Calu3 (cell line): ENCODE measurements at regions of chr16 and their contacts with region 1.

Region 1: DNA sequence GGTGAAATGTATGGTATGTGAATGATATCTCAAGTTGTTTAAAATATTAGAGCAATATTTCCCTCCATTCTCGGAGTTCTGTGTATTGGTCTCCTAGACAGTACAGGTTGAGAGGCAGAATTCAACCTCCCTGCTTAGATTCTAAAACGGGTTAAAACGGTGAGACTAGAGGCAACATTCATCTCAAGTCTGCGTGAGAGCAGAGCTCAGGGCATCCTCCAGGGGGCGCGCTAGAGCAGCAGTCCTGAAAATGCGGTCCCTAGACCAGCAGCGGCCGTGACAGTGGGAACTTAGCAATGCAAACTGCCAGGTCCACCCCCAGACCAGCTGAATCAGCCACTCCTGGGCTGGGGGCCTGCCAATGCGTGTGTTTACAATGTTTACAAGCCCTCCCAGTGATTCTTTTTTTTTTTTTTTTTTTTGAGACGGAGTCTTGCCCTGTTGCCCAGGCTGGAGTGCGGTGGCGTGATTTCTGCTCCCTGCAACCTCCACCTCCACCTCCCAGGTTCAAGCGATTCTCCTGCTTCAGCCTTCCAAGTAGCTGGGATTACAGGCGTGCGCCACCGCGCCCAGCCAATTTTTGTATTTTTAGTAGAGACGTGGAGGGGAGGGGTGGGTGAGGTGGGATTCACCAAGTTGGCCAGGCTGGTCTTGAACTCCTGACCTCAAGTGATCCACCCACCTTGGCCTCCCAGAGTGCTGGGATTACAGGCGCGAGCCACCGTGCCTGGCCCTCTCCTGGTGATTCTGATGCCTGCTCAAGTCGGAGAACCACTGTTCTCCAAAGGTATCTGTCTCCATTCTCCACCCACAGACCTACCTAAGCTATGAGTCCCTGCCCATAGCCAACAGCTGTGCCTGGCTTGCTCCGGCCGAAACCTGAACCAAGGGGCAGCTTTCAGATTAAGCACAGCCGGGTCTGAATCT is 24.2 kb downstream of the KLHL36 start:
- DNase-seq: peak; percentile 90
- H3K4me3 Mint-ChIP-seq: no peak overlapping the region
- H3K27ac Mint-ChIP-seq: no peak overlapping the region
- H3K4me1 Mint-ChIP-seq: no peaks in the 10 kb centered on the region
- H3K27me3 Mint-ChIP-seq: peaks cover 17% of the 10 kb centered on the region
- CTCF ChIP-seq: peak; percentile 93

Region 2: DNA sequence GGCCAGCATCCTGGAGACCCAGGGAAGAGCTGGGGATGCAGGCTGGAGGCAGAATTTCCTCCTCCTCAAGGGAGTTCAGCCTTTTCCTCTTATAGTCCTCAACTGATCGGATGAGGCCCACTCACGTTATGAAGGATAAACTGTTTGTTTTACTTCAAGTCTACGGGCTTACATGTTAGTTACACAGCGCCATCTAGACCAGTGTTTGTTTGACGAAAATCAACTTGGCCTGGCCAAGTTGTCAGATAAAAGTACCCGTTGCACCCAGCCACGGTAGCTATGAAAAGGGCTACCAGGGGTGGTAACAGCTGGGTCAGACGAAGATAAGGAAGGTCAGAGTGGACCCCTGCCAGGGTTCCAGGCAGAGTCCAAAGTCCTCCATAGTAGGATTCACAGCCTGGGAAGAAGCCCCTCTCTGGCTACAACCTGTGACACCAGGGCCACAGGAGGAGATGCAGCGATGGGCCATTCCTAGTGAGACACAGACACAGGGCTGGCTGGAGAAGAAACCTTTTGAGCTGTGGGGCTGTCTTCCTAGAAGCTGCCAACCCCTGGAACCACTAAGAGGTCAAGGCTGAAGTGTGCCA is 207.5 kb before region 1 on chr16:
- CTCF ChIA-PET with region 1: interaction called, 13 read pairs
- intact Hi-C with region 1: no loop called
- DNase-seq: no peak
- H3K4me3 Mint-ChIP-seq: no peak overlapping the region
- H3K27ac Mint-ChIP-seq: no peak overlapping the region
- H3K4me1 Mint-ChIP-seq: no peaks in the 10 kb centered on the region
- H3K27me3 Mint-ChIP-seq: no peaks in the 10 kb centered on the region
- CTCF ChIP-seq: no peak

Region 3: GRCh38 chr16:84660973-84661372 is 11.6 kb before region 1 on chr16:
- CTCF ChIA-PET with region 1: no interaction called
- intact Hi-C with region 1: no loop called
- DNase-seq: no peak
- H3K4me3 Mint-ChIP-seq: no peak overlapping the region
- H3K27ac Mint-ChIP-seq: no peak overlapping the region
- H3K4me1 Mint-ChIP-seq: no peaks in the 10 kb centered on the region
- H3K27me3 Mint-ChIP-seq: no peaks in the 10 kb centered on the region
- CTCF ChIP-seq: no peak

Region 4: GRCh38 chr16:84716754-84717153 is 44.2 kb after region 1 on chr16:
- CTCF ChIA-PET with region 1: no interaction called
- intact Hi-C with region 1: no loop called
- DNase-seq: no peak
- H3K4me3 Mint-ChIP-seq: no peak overlapping the region
- H3K27ac Mint-ChIP-seq: no peak overlapping the region
- H3K4me1 Mint-ChIP-seq: peaks cover 48% of the 10 kb centered on the region
- H3K27me3 Mint-ChIP-seq: no peaks in the 10 kb centered on the region
- CTCF ChIP-seq: no peak

Region 5: DNA sequence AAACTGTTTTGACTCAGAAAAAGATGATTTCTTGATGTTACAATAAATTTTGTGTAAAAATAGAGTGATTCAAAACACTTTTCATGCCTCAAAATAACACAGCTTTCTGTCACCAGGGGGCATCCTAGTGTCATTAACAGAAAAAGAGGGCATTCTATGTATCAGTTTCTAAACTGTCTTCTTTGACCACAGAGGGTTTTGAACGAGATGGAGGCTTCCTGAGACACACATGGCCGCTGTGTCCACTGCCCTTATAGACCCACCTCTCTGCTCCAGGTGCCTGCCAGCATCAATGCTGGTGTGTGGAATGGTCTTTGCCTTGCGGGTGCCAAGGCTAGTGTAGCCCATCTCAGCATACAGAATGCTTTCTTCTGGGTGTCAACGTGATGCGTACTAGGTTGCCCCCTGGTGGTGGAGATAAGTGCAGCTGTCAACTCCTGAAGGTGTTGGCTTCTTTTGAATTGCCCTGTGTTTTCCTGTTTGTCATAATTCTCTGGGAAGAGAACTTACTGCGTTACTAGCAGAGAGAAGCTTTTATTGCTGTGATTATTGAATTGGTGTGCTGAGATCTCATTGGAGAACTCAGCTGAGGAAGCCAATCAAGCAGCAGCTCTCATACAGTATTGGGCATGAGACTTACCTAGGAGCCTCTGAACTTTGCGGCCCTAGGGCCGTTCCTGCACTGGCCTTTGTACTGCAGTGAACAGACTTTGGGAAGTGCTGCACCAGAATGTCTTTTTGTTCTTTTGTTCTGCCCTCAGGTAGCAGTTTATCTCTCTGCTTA is 65.9 kb after region 1 on chr16:
- CTCF ChIA-PET with region 1: interaction called, 14 read pairs
- intact Hi-C with region 1: loop called (anchors 1 kb)
- DNase-seq: peak; percentile 87
- H3K4me3 Mint-ChIP-seq: no peak overlapping the region
- H3K27ac Mint-ChIP-seq: no peak overlapping the region
- H3K4me1 Mint-ChIP-seq: peaks cover 79% of the 10 kb centered on the region
- H3K27me3 Mint-ChIP-seq: no peaks in the 10 kb centered on the region
- CTCF ChIP-seq: peak; percentile 94